ENCODE measurements at regions of chr12 and their contacts with region 1.

Region 1: DNA sequence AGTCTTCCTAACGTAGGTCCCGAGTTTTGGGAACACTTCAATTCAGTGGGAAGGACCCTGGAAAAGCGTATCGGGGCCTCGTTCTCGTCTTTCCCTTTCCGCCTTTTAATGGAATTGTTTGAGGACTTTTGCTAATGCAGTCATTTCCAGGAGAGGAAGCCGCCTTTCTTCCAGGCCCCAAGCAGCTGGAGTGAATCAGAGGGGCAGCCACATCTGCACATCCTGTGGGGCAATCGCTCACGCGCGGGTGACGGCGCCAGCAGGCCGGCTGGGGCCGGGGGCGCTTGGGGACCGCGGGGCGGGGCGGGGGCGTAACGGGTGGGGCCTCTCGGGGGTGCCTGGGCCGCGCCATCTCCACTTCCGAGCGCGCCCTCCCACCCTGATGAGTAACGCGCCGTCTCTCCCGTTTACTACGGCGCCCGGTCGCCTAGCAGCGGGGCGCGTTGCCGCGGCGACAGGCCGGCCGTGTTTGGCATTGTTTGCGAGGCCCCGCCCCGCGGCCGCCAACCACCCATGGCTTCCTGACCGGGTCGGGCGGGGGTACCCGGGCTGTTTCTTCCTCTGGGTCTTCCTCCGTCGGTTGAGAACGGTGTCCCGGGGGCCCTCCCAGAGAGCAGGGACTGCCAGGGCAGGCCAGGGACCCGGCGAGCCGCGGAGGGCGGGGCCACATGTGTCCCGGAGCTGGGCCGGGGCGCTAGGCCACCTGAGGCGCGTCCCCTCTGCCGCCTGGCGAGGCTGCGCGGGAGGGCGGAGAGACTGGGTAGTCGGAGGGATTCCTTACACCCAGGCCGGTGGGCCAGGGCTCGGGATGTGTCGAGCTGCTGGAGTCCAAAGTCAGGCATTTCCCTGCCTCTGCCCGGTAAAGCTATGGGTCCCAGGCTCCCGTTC is 2.3 kb downstream of the GSG1 start:
- DNase-seq: peak; percentile 94
- ATAC-seq: peak; percentile 79
- H3K4me3 Mint-ChIP-seq: peak overlapping the region; percentile 83
- H3K27ac Mint-ChIP-seq: peak overlapping the region; percentile 96
- H3K4me1 Mint-ChIP-seq: peaks cover 63% of the 10 kb centered on the region
- H3K27me3 Mint-ChIP-seq: no peaks in the 10 kb centered on the region
- CTCF ChIP-seq: no peak

Region 2: GRCh38 chr12:11648831-11649702 is 1452.1 kb before region 1 on chr12 and contains the start of gene ETV6:
- CTCF ChIA-PET with region 1: no interaction called
- POLR2A ChIA-PET with region 1: no interaction called
- intact Hi-C with region 1: loop called (anchors 5 kb)
- DNase-seq: peak; percentile 72
- ATAC-seq: peak; percentile 54
- H3K4me3 Mint-ChIP-seq: peak within 1 kb of the TSS; percentile 99
- H3K27ac Mint-ChIP-seq: peak within 1 kb of the TSS; percentile 98
- H3K4me1 Mint-ChIP-seq: peaks cover 30% of the 10 kb centered on the region
- H3K27me3 Mint-ChIP-seq: no peaks in the 10 kb centered on the region
- CTCF ChIP-seq: no peak
- total RNA-seq, gene ETV6: 116 and 130 TPM in 2 replicates

Region 3: DNA sequence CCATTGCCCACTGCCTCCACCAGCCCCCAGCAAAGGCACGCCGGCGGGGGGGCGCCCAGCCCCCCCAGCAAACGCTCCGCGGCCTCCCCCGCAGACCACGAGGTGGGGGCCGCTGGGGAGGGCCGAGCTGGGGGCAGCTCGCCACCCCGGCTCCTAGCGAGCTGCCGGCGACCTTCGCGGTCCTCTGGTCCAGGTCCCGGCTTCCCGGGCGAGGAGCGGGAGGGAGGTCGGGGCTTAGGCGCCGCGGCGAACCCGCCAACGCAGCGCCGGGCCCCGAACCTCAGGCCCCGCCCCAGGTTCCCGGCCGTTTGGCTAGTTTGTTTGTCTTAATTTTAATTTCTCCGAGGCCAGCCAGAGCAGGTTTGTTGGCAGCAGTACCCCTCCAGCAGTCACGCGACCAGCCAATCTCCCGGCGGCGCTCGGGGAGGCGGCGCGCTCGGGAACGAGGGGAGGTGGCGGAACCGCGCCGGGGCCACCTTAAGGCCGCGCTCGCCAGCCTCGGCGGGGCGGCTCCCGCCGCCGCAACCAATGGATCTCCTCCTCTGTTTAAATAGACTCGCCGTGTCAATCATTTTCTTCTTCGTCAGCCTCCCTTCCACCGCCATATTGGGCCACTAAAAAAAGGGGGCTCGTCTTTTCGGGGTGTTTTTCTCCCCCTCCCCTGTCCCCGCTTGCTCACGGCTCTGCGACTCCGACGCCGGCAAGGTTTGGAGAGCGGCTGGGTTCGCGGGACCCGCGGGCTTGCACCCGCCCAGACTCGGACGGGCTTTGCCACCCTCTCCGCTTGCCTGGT is 384.1 kb before region 1 on chr12 and contains the start of gene CDKN1B:
- CTCF ChIA-PET with region 1: no interaction called
- POLR2A ChIA-PET with region 1: no interaction called
- intact Hi-C with region 1: loop called (anchors 2 kb)
- DNase-seq: peak; percentile 75
- ATAC-seq: peak; percentile 70
- H3K4me3 Mint-ChIP-seq: peak within 1 kb of the TSS; percentile 98
- H3K27ac Mint-ChIP-seq: peak within 1 kb of the TSS; percentile 97
- H3K4me1 Mint-ChIP-seq: peaks cover 67% of the 10 kb centered on the region
- H3K27me3 Mint-ChIP-seq: no peaks in the 10 kb centered on the region
- CTCF ChIP-seq: no peak
- total RNA-seq, gene CDKN1B: 56.6 and 59.0 TPM in 2 replicates

Region 4: GRCh38 chr12:12813120-12814101 is 287.7 kb before region 1 on chr12 and contains the start of gene DDX47:
- CTCF ChIA-PET with region 1: no interaction called
- POLR2A ChIA-PET with region 1: interaction called, 6 read pairs
- intact Hi-C with region 1: loop called (anchors 1 kb)
- DNase-seq: peak; percentile 98
- ATAC-seq: peak; percentile 81
- H3K4me3 Mint-ChIP-seq: peak within 1 kb of the TSS; percentile 96
- H3K27ac Mint-ChIP-seq: peak within 1 kb of the TSS; percentile 93
- H3K4me1 Mint-ChIP-seq: peaks cover 69% of the 10 kb centered on the region
- H3K27me3 Mint-ChIP-seq: no peaks in the 10 kb centered on the region
- CTCF ChIP-seq: peak; percentile 87
- total RNA-seq, gene DDX47: 97.1 and 98.5 TPM in 2 replicates

Region 5: GRCh38 chr12:13090054-13090725 is 10.9 kb before region 1 on chr12:
- CTCF ChIA-PET with region 1: no interaction called
- POLR2A ChIA-PET with region 1: interaction called, 13 read pairs
- intact Hi-C with region 1: no loop called
- DNase-seq: no peak
- ATAC-seq: no peak
- H3K4me3 Mint-ChIP-seq: no peak overlapping the region
- H3K27ac Mint-ChIP-seq: no peak overlapping the region
- H3K4me1 Mint-ChIP-seq: peaks cover 25% of the 10 kb centered on the region
- H3K27me3 Mint-ChIP-seq: peaks cover 2% of the 10 kb centered on the region
- CTCF ChIP-seq: no peak

Region 6: DNA sequence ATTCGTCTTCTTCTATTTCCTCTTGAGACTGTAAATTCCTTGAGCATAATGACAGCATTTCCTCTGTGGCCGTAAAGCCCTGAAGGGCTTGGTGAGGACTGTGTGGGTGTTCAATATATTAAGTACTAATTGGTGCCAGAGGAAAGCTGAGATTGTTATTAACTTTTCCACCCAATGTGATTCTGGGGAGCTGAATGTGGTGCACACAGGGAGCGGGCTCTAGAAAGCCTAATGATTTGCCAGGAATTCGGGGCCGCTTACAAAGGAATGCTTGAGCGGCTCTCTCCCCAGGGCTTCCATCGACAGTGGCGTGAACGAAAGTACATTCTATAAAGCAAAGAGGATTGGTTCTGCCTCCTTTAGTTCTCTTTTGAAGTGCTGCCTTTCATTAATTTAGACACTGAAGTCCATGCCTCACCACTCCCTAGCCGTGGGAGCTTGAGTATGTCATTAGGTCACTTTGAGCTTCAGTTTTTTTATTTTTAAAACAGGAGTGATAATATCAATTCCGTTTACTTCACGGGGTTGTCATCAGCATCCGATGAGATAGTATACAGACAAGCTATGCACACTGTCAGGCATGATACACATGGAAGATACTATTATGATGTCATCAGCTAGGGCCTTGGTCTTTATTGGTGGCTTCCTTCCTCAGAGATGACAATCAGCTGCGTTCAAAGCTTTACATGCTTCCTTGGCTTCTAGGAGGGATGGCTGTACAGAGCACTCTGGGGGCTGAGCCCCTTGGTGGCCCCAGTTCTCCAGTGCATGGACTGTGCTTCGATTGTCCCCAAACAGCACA is 13.3 kb after region 1 on chr12:
- CTCF ChIA-PET with region 1: no interaction called
- POLR2A ChIA-PET with region 1: no interaction called
- intact Hi-C with region 1: no loop called
- DNase-seq: no peak
- ATAC-seq: no peak
- H3K4me3 Mint-ChIP-seq: no peak overlapping the region
- H3K27ac Mint-ChIP-seq: no peak overlapping the region
- H3K4me1 Mint-ChIP-seq: no peaks in the 10 kb centered on the region
- H3K27me3 Mint-ChIP-seq: peaks cover 20% of the 10 kb centered on the region
- CTCF ChIP-seq: no peak

Region 7: GRCh38 chr12:13196130-13196921 is 95.2 kb after region 1 on chr12 and contains the start of gene EMP1:
- CTCF ChIA-PET with region 1: no interaction called
- POLR2A ChIA-PET with region 1: interaction called, 5 read pairs
- intact Hi-C with region 1: loop called (anchors 1 kb)
- DNase-seq: peak; percentile 32
- ATAC-seq: peak; percentile 92
- H3K4me3 Mint-ChIP-seq: peak within 1 kb of the TSS; percentile 75
- H3K27ac Mint-ChIP-seq: peak within 1 kb of the TSS; percentile 50
- H3K4me1 Mint-ChIP-seq: peaks cover 31% of the 10 kb centered on the region
- H3K27me3 Mint-ChIP-seq: peaks cover 38% of the 10 kb centered on the region
- CTCF ChIP-seq: no peak
- total RNA-seq, gene EMP1: 0.39 TPM in 1 of 2 replicates, not detected in the other

Region 8: DNA sequence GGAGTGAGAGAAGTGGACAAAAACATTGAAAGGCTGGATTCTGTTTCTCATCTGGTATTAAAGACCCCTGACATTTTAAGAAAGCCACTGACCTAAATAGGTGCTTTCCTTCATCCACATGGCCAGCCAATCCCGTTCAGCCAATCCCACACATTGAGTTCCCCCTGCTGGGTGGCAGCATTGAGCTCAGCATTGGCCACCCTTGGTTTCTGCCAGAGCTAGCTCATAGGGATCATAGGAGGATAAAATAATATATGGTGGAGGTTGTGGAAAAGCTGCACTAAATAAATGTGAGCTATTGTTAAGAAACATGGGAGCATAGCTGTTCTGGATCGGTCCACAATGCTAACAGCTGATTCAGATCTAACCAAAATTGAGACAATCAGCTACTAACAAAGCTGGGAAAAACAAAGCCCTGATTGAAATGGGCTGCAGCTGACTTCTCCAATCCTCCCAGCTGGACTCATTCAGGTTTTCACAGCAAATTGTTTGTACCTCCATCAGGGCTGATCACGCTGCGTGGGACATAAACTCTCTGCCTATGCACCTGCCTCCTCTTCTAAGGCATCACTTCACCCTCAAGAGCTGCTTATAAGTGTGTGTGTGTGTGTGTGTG is 351.9 kb after region 1 on chr12:
- CTCF ChIA-PET with region 1: no interaction called
- POLR2A ChIA-PET with region 1: no interaction called
- intact Hi-C with region 1: no loop called
- DNase-seq: no peak
- ATAC-seq: no peak
- H3K4me3 Mint-ChIP-seq: no peak overlapping the region
- H3K27ac Mint-ChIP-seq: no peak overlapping the region
- H3K4me1 Mint-ChIP-seq: no peaks in the 10 kb centered on the region
- H3K27me3 Mint-ChIP-seq: no peaks in the 10 kb centered on the region
- CTCF ChIP-seq: no peak

Region 9: GRCh38 chr12:14618983-14619382 is 1517.9 kb after region 1 on chr12:
- CTCF ChIA-PET with region 1: no interaction called
- POLR2A ChIA-PET with region 1: no interaction called
- intact Hi-C with region 1: loop called (anchors 10 kb)
- DNase-seq: no peak
- ATAC-seq: no peak
- H3K4me3 Mint-ChIP-seq: peak overlapping the region; percentile 19
- H3K27ac Mint-ChIP-seq: peak overlapping the region; percentile 9
- H3K4me1 Mint-ChIP-seq: peaks cover 48% of the 10 kb centered on the region
- H3K27me3 Mint-ChIP-seq: no peaks in the 10 kb centered on the region
- CTCF ChIP-seq: no peak